Mammary epithelial cell (primary cell): ENCODE measurements at regions of chr7 and their contacts with region 1.

Region 1: GRCh38 chr7:22103255-22103969 is 157.7 kb upstream of the CDCA7L start:
- DNase-seq: peak; percentile 87
- H3K4me3 ChIP-seq: no peak overlapping the region
- H3K27ac ChIP-seq: no peak overlapping the region
- H3K4me1 ChIP-seq: no peaks in the 10 kb centered on the region
- H3K27me3 ChIP-seq: no peaks in the 10 kb centered on the region
- CTCF ChIP-seq: peak; percentile 62 to 81

Region 2: GRCh38 chr7:21393937-21394336 is 709.5 kb before region 1 on chr7:
- CTCF ChIA-PET with region 1: no interaction called
- dilution Hi-C with region 1: no loop called
- in situ Hi-C with region 1: no loop called
- intact Hi-C with region 1: no loop called
- DNase-seq: no peak
- H3K4me3 ChIP-seq: no peak overlapping the region
- H3K27ac ChIP-seq: no peak overlapping the region
- H3K4me1 ChIP-seq: no peaks in the 10 kb centered on the region
- H3K27me3 ChIP-seq: no peaks in the 10 kb centered on the region
- CTCF ChIP-seq: no peak

Region 3: GRCh38 chr7:22066484-22066883 is 36.9 kb before region 1 on chr7:
- CTCF ChIA-PET with region 1: no interaction called
- dilution Hi-C with region 1: no loop called
- in situ Hi-C with region 1: no loop called
- intact Hi-C with region 1: no loop called
- DNase-seq: no peak
- H3K4me3 ChIP-seq: no peak overlapping the region
- H3K27ac ChIP-seq: no peak overlapping the region
- H3K4me1 ChIP-seq: no peaks in the 10 kb centered on the region
- H3K27me3 ChIP-seq: peaks cover 4% of the 10 kb centered on the region
- CTCF ChIP-seq: no peak

Region 4: GRCh38 chr7:23020742-23021401 is 917.5 kb after region 1 on chr7:
- CTCF ChIA-PET with region 1: no interaction called
- dilution Hi-C with region 1: no loop called
- in situ Hi-C with region 1: no loop called
- intact Hi-C with region 1: loop called (anchors 10 kb)
- DNase-seq: peak; percentile 96
- H3K4me3 ChIP-seq: no peak overlapping the region
- H3K27ac ChIP-seq: peak overlapping the region; percentile 94
- H3K4me1 ChIP-seq: peaks cover 35% of the 10 kb centered on the region
- H3K27me3 ChIP-seq: no peaks in the 10 kb centered on the region
- CTCF ChIP-seq: no peak